Ascending aorta (tissue), 2 donors: ENCODE measurements at regions of chr3 and their contacts with region 1.

Region 1: GRCh38 chr3:69353503-69353902 is 32.4 kb downstream of the FRMD4B start:
- DNase-seq: peak in 1 of 2 donors; percentile 69
- H3K4me3 ChIP-seq: peak overlapping the region in 1 of 2 donors; percentile 42
- H3K27ac ChIP-seq: peak overlapping the region; percentile 36 to 60
- H3K4me1 ChIP-seq: no peaks in the 10 kb centered on the region
- H3K27me3 ChIP-seq: no peaks in the 10 kb centered on the region
- CTCF ChIP-seq: no peak

Region 2: GRCh38 chr3:69212411-69213139 is 140.9 kb before region 1 on chr3:
- intact Hi-C with region 1: no loop called
- DNase-seq: no peak
- H3K4me3 ChIP-seq: no peak overlapping the region
- H3K27ac ChIP-seq: no peak overlapping the region
- H3K4me1 ChIP-seq: no peaks in the 10 kb centered on the region
- H3K27me3 ChIP-seq: no peaks in the 10 kb centered on the region
- CTCF ChIP-seq: no peak

Region 3: DNA sequence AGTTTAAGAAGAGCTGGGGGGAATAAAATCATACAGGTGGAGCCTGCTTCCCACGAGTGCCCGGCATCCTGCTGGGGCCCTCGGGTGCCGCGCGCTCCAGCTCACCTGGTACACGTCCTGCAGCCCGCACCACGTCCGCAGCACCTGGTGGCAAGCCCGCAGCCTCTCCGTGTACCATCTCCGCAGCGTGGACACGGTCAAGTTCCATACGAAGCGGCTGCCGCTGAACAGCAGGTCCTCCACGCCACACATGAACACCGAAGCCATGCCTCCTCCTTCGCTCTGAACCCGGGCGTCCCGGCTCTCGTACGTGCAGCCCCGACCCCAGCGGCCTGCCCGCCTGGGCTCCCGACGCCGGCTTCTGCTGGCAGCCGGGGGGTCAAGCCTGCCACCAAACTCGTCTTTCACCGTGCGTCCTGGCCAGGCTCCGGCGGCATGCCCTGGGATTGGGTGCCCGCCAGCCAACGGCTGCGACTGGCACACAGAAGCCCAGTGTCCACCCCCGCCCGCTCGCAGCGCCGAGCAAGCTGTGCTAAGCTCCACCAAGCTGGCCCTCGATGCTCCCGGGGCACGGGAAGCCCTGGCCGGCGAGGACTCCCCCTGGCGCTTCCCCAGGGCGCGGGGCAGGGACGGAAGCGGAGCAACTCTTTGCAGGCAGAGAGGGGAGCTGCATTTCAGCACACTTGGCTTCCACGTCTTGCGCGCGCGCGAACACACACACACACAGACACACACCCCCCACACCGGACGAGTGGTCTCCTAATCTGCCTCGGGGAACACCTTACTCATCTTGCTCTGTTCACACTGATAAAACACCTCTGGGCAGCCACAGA is 32.4 kb after region 1 on chr3 and contains the start of gene FRMD4B:
- intact Hi-C with region 1: loop called (anchors 5 kb)
- DNase-seq: peak; percentile 50 to 86
- H3K4me3 ChIP-seq: peak within 1 kb of the TSS; percentile 65 to 86
- H3K27ac ChIP-seq: peak within 1 kb of the TSS; percentile 70
- H3K4me1 ChIP-seq: no peaks in the 10 kb centered on the region
- H3K27me3 ChIP-seq: no peaks in the 10 kb centered on the region
- CTCF ChIP-seq: peak in 2 of 3 experiments; percentile 23 to 25
- total RNA-seq, gene FRMD4B: 13.5 TPM